ENCODE measurements at regions of chr6 and their contacts with region 1.

Region 1: DNA sequence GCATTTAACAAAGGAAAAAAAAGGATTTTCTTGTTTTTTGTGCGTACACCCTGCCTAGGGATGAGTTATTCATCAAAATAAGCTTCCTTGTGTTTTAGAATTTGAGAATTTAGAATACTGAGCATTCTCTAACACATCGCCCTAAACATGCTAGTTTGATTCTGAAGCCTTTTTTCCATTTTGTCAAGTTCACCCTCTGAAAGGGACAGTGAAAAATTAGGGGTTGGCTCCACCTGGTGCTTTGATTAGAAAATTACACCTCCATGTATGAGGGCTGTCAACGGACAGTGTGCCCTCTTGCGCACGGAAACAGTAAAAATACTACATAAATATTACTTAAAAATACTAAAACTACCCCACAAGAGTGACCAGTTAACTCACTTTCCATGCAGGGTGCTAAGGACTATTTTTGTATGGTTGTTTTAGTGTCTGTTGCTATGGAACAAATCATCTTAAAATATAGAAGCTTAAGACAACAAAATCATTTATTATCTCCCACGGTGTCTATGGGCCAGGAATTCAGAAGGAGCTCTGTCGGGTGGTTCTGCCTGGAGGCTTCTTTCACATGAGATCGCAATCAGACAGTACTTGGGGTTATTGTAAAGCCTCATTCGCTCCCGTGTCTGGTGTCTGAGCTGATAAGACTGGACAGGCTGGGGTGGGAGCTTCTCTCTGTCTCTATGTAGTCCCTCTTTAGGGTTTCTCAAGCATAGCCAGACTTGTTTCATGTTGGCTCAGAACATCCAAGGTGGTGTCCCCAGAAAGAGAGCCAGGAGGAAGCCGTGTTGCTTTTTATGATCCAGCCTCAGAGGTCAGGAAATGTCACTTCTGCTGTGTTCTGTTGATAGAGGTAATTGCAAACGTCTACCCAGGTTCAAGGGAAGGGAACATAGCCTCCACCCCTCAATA is 41.1 kb upstream of the TMEM170B start:
- DNase-seq: peak; percentile 50 to 83
- ATAC-seq: peak; percentile 72 to 90; a peak in 5 of 6 replicates
- H3K4me3 ChIP-seq: no peak overlapping the region
- H3K27ac ChIP-seq: peak overlapping the region; percentile 77 to 87
- H3K4me1 ChIP-seq: peaks cover 26% of the 10 kb centered on the region
- CTCF ChIP-seq: peak; percentile 95
- EP300 ChIP-seq: no peak
- POLR2A ChIP-seq: no peak
- RAD21 ChIP-seq: peak; percentile 98

Region 2: GRCh38 chr6:11093589-11094410 is 402.6 kb before region 1 on chr6 and contains the start of gene SMIM13:
- CTCF ChIA-PET with region 1: interaction called, 13 read pairs
- POLR2A ChIA-PET with region 1: interaction called, 3 read pairs
- DNase-seq: peak; percentile 92 to 97
- ATAC-seq: peak; percentile 96 to 97
- H3K4me3 ChIP-seq: peak within 1 kb of the TSS; percentile 84
- H3K27ac ChIP-seq: peak within 1 kb of the TSS; percentile 96 to 98
- H3K4me1 ChIP-seq: peaks cover 21% of the 10 kb centered on the region; the same call in 2 of the 3 replicates
- CTCF ChIP-seq: peak; percentile 63
- EP300 ChIP-seq: no peak
- POLR2A ChIP-seq: peak; percentile 51
- RAD21 ChIP-seq: no peak; a peak in 1 of 5 replicates
- polyA plus RNA-seq, gene SMIM13: 11.3 and 12.7 TPM in 2 replicates

Region 3: DNA sequence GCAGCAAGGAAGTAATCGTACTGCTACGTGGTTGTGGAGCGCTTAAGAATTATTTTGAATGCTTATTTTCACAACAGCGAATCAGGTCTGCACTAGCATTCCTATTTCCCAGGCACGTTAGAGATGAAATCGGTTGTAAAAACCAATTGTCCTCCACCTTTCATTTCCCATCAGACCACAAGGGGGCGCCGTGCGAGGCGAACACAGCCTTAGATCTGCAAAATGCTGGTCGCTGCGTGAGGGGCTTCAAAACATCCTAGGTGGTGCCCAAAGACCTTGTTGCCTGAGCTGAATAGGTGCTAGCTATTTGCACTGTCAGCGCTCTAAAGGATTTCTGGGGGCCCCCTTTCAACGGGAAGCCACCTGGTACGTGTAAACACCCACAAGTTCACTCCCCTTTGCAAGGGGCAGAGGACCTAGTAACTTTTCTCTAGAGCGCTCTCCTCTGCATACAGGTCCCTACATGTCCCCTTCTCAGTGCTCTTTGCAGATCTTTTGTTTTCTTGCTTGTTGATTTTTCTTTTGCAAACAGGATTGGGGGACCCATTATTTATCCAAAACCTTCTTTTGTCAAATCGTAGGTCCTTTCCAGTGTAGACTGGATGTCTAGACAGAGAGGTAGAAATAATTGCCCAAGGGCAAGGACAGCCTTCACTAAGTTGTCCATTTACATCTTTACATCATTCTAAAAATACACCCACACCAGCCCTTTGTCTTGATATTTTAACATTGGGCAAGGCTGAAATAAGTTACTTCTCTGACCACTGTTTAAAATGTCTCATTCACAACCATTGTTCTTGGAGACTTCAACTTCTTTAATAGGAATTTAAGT is 323.7 kb before region 1 on chr6:
- CTCF ChIA-PET with region 1: interaction called, 26 read pairs
- POLR2A ChIA-PET with region 1: no interaction called
- DNase-seq: peak in 1 of 2 experiments; percentile 64
- ATAC-seq: peak; percentile 54 to 84; a peak in 4 of 6 replicates
- H3K4me3 ChIP-seq: no peak overlapping the region
- H3K27ac ChIP-seq: peak overlapping the region; percentile 69 to 83
- H3K4me1 ChIP-seq: peaks cover 10% of the 10 kb centered on the region
- CTCF ChIP-seq: peak; percentile 63
- EP300 ChIP-seq: no peak
- POLR2A ChIP-seq: no peak
- RAD21 ChIP-seq: peak; percentile 48 to 67; a peak in 4 of 5 replicates

Region 4: DNA sequence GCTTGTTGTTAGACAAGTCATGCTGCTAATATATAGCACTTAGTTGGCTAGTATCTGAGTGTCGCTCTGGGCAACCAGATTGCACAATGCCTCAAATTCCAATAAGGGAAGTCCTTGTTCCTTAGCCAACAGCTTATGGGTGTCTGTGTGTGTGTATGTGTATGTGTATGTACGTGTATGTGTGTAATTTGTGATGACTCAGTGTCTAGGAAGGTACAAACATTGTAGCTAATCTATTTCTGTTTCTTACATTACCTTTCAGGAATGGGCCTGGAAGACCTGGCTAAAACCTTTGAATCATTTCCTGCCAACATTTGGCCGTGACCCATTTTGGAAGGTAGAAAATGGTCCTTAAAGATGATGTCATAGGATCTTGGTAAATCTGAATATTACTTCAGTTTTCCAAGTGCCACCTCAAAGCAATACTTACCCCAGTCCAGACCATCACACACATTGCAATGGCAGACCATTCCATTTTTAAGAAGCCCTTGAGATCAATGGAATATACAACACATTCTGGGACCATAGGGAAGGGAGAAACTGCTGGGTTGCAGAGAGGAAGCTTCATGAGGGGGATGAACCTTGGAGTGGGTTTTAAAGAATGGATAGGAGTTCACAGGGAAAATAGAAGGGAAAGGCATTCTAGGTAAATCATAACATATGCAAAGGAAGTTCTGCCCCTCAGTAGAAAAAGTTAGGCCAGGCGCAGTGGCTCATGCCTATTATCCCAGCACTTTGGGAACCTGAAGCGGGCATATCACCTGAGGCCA is 289.0 kb before region 1 on chr6:
- CTCF ChIA-PET with region 1: interaction called, 66 read pairs
- POLR2A ChIA-PET with region 1: no interaction called
- DNase-seq: peak; percentile 58 to 98
- ATAC-seq: peak; percentile 75 to 79
- H3K4me3 ChIP-seq: no peak overlapping the region
- H3K27ac ChIP-seq: peak overlapping the region; percentile 94 to 98
- H3K4me1 ChIP-seq: peaks cover 96% of the 10 kb centered on the region
- CTCF ChIP-seq: no peak
- EP300 ChIP-seq: peak; percentile 99
- POLR2A ChIP-seq: no peak
- RAD21 ChIP-seq: peak; percentile 37 to 58

Region 5: DNA sequence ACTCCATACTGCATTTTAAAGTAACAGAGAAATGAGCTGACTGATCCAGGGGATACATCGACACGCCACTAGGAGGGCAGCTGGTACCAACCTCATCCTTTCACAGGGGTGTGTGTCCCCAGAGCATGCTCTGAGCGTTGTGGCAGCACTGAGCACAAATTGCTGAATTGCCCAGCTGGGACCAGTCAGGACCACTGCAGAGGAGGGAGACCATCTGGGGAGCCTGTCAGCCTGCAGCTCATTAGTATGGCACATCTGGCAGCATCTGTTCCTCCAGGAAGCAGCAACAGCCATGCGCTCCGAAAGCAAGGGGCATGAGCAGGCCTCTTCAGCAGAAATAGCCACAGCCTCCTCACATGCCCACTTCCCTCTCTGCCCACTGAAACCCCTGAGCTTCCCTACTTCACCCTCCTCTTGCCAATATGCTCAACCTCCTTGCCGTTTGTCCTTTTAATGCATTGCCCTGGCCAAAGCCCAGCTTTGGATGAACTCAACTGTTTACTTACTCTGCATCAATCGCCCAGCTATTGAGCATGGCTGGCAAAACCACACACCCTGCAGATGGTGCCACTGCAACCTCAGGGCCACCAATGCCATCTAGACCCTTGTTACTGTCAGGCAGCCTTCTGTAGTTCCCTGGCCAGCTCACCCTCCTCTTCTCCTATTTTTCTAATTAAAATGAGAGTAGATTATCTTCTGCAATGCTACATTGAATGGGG is 186.3 kb before region 1 on chr6:
- CTCF ChIA-PET with region 1: interaction called, 10 read pairs
- POLR2A ChIA-PET with region 1: no interaction called
- DNase-seq: peak in 1 of 2 experiments; percentile 31
- ATAC-seq: peak; percentile 47 to 85; a peak in 4 of 6 replicates
- H3K4me3 ChIP-seq: no peak overlapping the region
- H3K27ac ChIP-seq: peak overlapping the region; percentile 17 to 51; a peak in 5 of 6 replicates
- H3K4me1 ChIP-seq: peaks cover 20% of the 10 kb centered on the region
- CTCF ChIP-seq: no peak
- EP300 ChIP-seq: no peak
- POLR2A ChIP-seq: no peak
- RAD21 ChIP-seq: no peak

Region 6: GRCh38 chr6:11434565-11435326 is 61.7 kb before region 1 on chr6:
- CTCF ChIA-PET with region 1: interaction called, 33 read pairs
- POLR2A ChIA-PET with region 1: no interaction called
- DNase-seq: peak; percentile 63 to 95
- ATAC-seq: peak; percentile 93 to 95
- H3K4me3 ChIP-seq: no peak overlapping the region
- H3K27ac ChIP-seq: peak overlapping the region; percentile 89 to 92
- H3K4me1 ChIP-seq: peaks cover 58% of the 10 kb centered on the region
- CTCF ChIP-seq: no peak
- EP300 ChIP-seq: peak; percentile 93 to 98; a peak in 4 of 5 replicates
- POLR2A ChIP-seq: no peak
- RAD21 ChIP-seq: peak; percentile 30 to 72

Region 7: DNA sequence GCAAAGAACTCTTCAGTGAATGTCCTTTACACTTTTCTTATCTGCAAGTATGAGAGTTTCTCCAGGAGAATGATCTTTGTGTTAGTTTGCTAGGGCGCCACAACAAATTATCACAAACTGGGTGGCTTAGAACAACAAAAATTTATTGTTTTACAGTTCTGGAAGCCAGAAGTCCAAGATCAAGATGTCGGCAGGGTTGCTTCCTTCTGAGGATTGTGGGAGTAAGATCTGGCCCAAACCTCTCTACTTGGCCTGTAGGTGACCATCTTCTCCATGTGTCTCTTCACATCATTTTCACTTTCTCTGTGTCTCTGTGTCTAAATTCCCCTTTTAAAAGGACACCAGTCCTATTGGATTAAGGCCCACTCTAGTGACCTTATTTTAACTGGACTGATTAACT is 179.2 kb after region 1 on chr6:
- CTCF ChIA-PET with region 1: no interaction called
- POLR2A ChIA-PET with region 1: no interaction called
- DNase-seq: no peak
- ATAC-seq: no peak
- H3K4me3 ChIP-seq: no peak overlapping the region
- H3K27ac ChIP-seq: no peak overlapping the region
- H3K4me1 ChIP-seq: no peaks in the 10 kb centered on the region
- CTCF ChIP-seq: no peak
- EP300 ChIP-seq: no peak
- POLR2A ChIP-seq: no peak
- RAD21 ChIP-seq: no peak

Measured in A549 (cell line).